Dorsolateral prefrontal cortex (tissue), 120 donors: ENCODE measurements at regions of chr5 and their contacts with region 1.

Region 1: DNA sequence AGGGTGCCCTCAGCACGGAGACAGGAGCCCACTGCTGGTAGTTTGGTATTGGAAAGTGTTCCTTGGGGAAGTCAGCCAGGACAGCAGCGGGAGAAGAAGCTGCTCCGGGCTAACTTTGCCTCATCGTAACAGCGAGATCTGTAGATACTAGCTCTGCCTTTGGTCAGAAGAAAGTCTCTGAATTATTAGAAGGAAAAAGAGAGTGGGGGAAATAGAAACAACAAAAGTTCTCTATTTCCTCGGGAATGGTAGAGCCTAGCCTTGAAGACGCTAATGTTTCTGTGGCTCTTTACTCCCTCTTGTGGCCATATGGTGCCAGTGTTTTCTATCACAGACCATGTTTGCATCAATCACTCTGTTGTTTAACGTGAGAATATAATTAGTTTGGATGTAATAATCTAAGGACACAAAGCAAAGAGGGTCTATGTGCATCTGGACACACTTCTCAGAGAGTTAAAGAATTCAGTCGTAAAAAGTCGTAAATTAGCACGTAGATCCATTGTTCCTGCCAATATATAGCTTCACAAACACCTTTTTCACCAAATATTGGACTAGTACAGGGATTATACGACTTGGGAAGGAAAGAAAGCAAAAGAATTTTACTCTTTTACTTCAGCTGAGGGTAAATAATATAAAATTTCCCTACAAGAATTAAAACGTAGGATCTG is 40.2 kb upstream of the HSD17B4 start:
- DNase-seq: peak in 7 of 10 donors; percentile 25 to 73 (median 45)
- H3K4me3 ChIP-seq: peak overlapping the region; percentile 27 to 75 (median 59)
- H3K27ac ChIP-seq: peak overlapping the region in 46 of 59 donors; percentile 8 to 85 (median 59)
- H3K27me3 ChIP-seq: peaks cover 0 to 8% (median 0%) of the 10 kb centered on the region in 45 donors
- CTCF ChIP-seq: peak in 55 of 56 donors; percentile 86 to 99 (median 96)

Region 2: GRCh38 chr5:119022017-119022745 is 389.9 kb before region 1 on chr5:
- intact Hi-C with region 1: loop called in 1 of 2 experiments (anchors 2 kb)
- DNase-seq: no peak
- H3K4me3 ChIP-seq: no peak overlapping the region
- H3K27ac ChIP-seq: peak overlapping the region in 1 of 59 donors; percentile 39
- H3K27me3 ChIP-seq: no peaks in the 10 kb centered on the region
- CTCF ChIP-seq: peak; percentile 25 to 76 (median 56)

Region 3: GRCh38 chr5:119070828-119071572 is 341.1 kb before region 1 on chr5 and contains the start of gene DMXL1:
- intact Hi-C with region 1: loop called in 1 of 2 experiments (anchors 5 kb)
- DNase-seq: peak; percentile 97 to 100 (median 99)
- H3K4me3 ChIP-seq: peak within 1 kb of the TSS; percentile 58 to 99 (median 94)
- H3K27ac ChIP-seq: peak within 1 kb of the TSS; percentile 68 to 99 (median 97)
- H3K27me3 ChIP-seq: no peaks in the 10 kb centered on the region
- CTCF ChIP-seq: peak in 21 of 56 donors; percentile 2 to 43 (median 11)
- total RNA-seq, gene DMXL1: 59.0 to 112 (median 84.6) TPM